SK-N-SH (cell line): ENCODE measurements at regions of chr11 and their contacts with region 1.

Region 1: DNA sequence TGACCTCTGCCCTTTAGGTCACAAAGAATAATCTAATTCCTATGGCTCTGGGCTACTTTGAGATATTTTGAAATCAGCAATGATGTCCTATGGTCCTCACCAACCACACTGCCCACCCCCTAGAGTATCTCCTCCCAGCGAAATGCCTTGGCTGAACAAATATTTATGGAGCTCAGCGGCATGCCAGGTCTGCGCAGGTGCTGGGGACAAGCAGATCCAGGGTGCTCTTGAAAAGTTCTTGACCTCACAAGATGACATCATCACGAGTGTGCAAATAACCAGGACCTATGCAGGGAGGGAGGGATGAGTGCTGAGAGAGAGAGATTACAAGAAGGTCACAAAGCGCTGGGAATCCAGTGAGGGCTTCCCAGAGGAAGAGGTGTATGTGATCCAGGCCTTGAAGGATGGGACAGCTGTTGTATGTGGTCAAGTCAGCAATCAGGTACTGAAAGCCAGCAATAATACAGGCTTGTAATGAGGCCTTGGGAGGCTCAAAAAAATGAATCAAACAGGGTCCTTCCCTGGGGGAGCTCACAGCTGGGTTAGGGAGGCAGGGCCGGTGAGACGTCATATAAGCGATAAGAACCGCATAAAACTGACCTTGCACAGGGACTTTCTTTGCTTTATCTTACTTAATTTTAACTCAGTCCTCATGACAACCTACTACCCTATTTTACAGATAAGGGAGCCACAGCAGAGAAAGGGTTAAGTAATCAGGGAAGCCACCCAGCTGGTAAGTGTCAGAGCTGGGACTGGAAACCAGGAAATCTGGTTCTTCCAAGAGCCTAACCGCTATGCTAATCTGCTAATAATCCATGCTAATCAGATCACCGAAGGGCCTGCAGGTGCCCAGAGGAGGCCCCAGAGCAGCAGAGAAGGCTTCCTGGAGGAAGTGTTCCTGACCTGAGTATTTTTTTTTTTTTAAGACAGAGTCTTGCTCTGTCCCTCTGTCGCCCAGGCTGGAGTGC is 8.3 kb downstream of the ARRB1 start:
- DNase-seq: no peak
- H3K4me3 ChIP-seq: no peak overlapping the region
- H3K27ac ChIP-seq: no peak overlapping the region; a peak in 1 of 4 replicates
- H3K4me1 ChIP-seq: peaks cover 52 to 75% of the 10 kb centered on the region in 2 experiments
- H3K27me3 ChIP-seq: no peaks in the 10 kb centered on the region
- CTCF ChIP-seq: no peak
- EP300 ChIP-seq: peak in 1 of 2 experiments; percentile 19; a peak in 1 of 4 replicates
- RAD21 ChIP-seq: no peak

Region 2: GRCh38 chr11:75328426-75329277 is 14.5 kb before region 1 on chr11:
- CTCF ChIA-PET with region 1: interaction called, 12 read pairs
- POLR2A ChIA-PET with region 1: interaction called, 3 read pairs
- DNase-seq: peak; percentile 87
- H3K4me3 ChIP-seq: no peak overlapping the region
- H3K27ac ChIP-seq: peak overlapping the region in 1 of 2 experiments; percentile 58; a peak in 2 of 4 replicates
- H3K4me1 ChIP-seq: peaks cover 11 to 23% of the 10 kb centered on the region in 2 experiments; a peak in 3 of 4 replicates
- H3K27me3 ChIP-seq: no peaks in the 10 kb centered on the region
- CTCF ChIP-seq: peak; percentile 73
- EP300 ChIP-seq: peak in 1 of 2 experiments; percentile 27; a peak in 2 of 4 replicates
- RAD21 ChIP-seq: peak; percentile 81

Region 3: DNA sequence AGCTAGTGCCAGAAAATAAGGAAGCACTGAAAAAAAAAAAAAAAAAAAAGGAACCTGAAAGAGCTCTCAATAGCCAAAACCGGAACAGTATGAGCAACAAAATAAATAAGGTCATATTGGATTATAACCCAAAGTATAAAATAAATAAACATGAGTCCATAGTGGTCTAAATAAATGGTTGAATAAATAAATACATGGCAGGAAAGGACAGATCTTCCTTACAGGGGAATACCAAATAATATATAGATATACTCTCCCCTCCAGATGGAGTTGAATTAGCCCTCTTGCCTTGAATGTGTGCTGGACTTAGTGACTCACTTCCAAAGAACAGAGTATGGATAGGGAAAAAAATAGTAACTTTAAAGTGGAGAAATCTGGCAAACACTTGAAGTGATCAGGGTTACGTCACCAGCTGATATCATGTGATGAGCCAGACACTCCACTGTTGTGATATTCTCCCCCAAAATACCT is 22.6 kb after region 1 on chr11:
- CTCF ChIA-PET with region 1: no interaction called
- POLR2A ChIA-PET with region 1: no interaction called
- DNase-seq: no peak
- H3K4me3 ChIP-seq: no peak overlapping the region
- H3K27ac ChIP-seq: no peak overlapping the region
- H3K4me1 ChIP-seq: no peaks in the 10 kb centered on the region
- H3K27me3 ChIP-seq: no peaks in the 10 kb centered on the region
- CTCF ChIP-seq: no peak
- EP300 ChIP-seq: no peak
- RAD21 ChIP-seq: no peak